HEK293T (cell line): ENCODE measurements at regions of chr17 and their contacts with region 1.

Region 1: GRCh38 chr17:68501074-68501473 is 11.2 kb upstream of the PRKAR1A start:
- DNase-seq: no peak

Region 2: GRCh38 chr17:68457539-68458259 is 43.4 kb before region 1 on chr17:
- CTCF ChIA-PET with region 1: no interaction called
- POLR2A ChIA-PET with region 1: no interaction called
- DNase-seq: peak; percentile 99

Region 3: GRCh38 chr17:68512247-68512982 is 11.3 kb after region 1 on chr17 and contains the start of gene PRKAR1A:
- CTCF ChIA-PET with region 1: interaction called, 3 read pairs
- POLR2A ChIA-PET with region 1: interaction called, 15 read pairs
- DNase-seq: peak; percentile 95

Region 4: GRCh38 chr17:68533887-68534694 is 33.0 kb after region 1 on chr17:
- CTCF ChIA-PET with region 1: no interaction called
- POLR2A ChIA-PET with region 1: no interaction called
- DNase-seq: no peak